Activated naive CD8-positive, alpha-beta T cell treated with anti-CD3 and anti-CD28 coated beads, Interleukin-2, amount 10 ng/mL, durations not matched to agents 7 days and 5 days (primary cell): ENCODE measurements at regions of chr17 and their contacts with region 1.

Region 1: DNA sequence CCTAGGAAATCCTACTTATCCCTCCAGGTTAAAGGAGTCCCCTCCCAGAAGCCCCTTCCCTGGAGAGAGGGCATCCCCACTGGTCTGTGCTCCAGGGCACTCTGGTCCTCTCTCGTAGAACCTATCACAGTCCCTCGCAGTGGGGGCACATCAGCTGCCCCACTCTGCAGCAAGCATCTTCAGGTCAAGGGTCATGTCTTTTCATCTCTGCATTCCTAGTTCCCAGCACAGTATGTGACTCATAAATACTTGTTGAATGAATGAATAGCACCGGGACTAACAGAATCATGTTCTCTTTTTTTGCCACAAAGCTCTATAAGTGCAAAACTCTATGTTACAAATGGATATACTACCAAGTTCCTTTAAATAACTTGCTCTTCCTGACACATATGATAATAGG is 36.0 kb downstream of the RNF157 start:
- DNase-seq: peak; percentile 17
- ATAC-seq: no peak
- H3K4me3 Mint-ChIP-seq: no peak overlapping the region
- H3K27ac Mint-ChIP-seq: peak overlapping the region; percentile 54
- H3K4me1 Mint-ChIP-seq: peaks cover 57% of the 10 kb centered on the region
- H3K27me3 Mint-ChIP-seq: no peaks in the 10 kb centered on the region

Region 2: GRCh38 chr17:76191896-76192295 is 12.4 kb before region 1 on chr17:
- POLR2A ChIA-PET with region 1: interaction called, 26 read pairs
- DNase-seq: no peak
- ATAC-seq: peak; percentile 80
- H3K4me3 Mint-ChIP-seq: peak overlapping the region; percentile 74
- H3K27ac Mint-ChIP-seq: peak overlapping the region; percentile 91
- H3K4me1 Mint-ChIP-seq: peaks cover 69% of the 10 kb centered on the region
- H3K27me3 Mint-ChIP-seq: no peaks in the 10 kb centered on the region

Region 3: GRCh38 chr17:76240461-76241203 is 36.4 kb after region 1 on chr17 and contains the start of gene RNF157:
- POLR2A ChIA-PET with region 1: interaction called, 20 read pairs
- DNase-seq: peak; percentile 84
- ATAC-seq: peak; percentile 87
- H3K4me3 Mint-ChIP-seq: peak within 1 kb of the TSS; percentile 94
- H3K27ac Mint-ChIP-seq: peak within 1 kb of the TSS; percentile 96
- H3K4me1 Mint-ChIP-seq: peaks cover 62% of the 10 kb centered on the region
- H3K27me3 Mint-ChIP-seq: no peaks in the 10 kb centered on the region
- total RNA-seq, gene RNF157: 103 to 110 TPM

Region 4: DNA sequence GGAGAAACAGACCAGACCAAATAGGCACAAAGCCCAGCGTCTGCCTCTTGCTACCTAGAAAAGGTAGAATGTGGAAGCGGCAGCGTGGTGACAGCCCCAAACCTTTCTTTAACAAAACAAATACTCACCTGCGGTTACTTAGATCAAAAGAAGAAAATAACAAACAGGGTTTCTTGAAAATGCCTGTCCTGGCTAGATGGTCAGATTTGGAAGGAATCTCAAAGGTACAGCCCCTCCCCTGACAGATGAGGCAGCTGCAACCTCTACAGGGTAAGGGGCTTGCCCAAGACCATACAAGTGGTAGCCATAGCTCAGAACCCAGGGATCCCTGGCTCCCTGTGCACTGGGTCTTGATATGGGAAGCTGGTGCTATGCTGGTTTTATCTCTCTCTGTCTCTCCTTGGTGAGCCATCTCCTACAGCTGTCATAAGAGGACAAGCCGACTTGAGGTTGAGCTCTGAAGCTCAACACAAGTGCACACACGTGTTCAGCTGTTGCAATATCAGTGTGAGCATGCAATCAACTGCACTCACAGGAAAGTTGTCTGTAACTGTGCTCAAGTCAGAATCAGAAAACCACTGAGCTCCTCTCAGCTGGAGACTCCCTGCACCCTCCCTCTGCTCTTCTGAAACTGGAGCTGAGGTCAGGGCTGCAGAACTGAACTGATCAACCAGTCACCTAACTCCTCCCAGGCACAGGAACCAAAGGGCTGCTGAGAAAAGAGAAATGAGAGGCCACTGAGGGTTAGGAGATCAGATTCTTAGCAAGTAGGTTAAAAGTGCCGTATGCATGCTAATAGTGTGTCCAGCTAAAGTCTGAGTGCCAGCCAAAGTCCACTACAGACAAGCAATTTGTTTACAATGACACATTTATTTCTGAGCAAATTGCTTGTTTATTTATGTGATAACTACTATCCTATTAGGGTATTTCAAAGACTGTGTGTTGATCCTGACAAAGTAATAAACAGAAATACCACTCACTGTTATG is 42.1 kb after region 1 on chr17:
- POLR2A ChIA-PET with region 1: interaction called, 12 read pairs
- DNase-seq: peak; percentile 60
- ATAC-seq: peak; percentile 98
- H3K4me3 Mint-ChIP-seq: peak overlapping the region; percentile 59
- H3K27ac Mint-ChIP-seq: peak overlapping the region; percentile 95
- H3K4me1 Mint-ChIP-seq: peaks cover 56% of the 10 kb centered on the region
- H3K27me3 Mint-ChIP-seq: no peaks in the 10 kb centered on the region

Region 5: GRCh38 chr17:76255801-76256429 is 51.6 kb after region 1 on chr17:
- POLR2A ChIA-PET with region 1: interaction called, 15 read pairs
- DNase-seq: peak; percentile 34
- ATAC-seq: peak; percentile 2
- H3K4me3 Mint-ChIP-seq: peak overlapping the region; percentile 83
- H3K27ac Mint-ChIP-seq: peak overlapping the region; percentile 94
- H3K4me1 Mint-ChIP-seq: peaks cover 41% of the 10 kb centered on the region
- H3K27me3 Mint-ChIP-seq: no peaks in the 10 kb centered on the region

Region 6: DNA sequence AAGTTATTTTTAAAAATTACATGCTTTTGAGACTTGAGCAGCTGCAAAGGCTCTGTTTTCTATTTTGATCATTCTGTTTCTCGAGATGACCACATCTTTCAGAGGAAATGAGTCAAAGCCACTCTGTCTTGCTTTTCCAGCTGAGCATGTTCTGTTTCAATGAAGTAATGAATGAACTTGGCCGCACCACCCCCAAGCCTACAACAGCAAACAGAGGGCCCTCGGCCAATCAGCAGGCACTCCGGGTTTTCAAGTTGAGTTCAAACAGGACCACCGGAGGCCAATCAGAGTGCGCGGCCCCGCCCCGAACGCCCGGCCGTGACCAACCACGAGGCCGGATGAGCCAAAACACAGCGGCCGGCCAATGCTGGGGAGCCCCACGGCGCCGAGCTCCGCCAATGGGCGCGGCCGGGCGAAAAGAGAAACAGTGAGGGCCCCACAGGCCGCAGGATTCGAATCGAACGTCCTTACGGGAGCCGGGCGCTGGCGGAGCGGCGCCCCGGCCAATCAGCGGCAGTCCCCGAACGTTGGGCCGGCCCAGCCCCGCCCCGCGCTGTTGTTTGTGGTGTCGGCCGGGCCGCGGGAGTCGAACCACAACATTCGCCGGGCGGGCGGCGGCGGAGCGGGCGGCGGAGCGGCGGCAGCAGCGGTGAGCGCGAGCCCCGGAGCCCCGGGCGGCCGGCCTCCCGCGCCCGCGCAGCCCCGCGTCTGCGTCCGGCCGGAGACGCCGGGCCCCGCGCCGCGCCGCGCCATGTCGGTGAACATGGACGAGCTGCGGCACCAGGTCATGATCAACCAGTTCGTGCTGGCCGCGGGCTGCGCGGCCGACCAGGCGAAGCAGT is 60.7 kb after region 1 on chr17 and contains the start of gene UBALD2:
- POLR2A ChIA-PET with region 1: interaction called, 57 read pairs
- DNase-seq: peak; percentile 99
- ATAC-seq: peak; percentile 81
- H3K4me3 Mint-ChIP-seq: peak within 1 kb of the TSS; percentile 88
- H3K27ac Mint-ChIP-seq: peak within 1 kb of the TSS; percentile 96
- H3K4me1 Mint-ChIP-seq: peaks cover 51% of the 10 kb centered on the region
- H3K27me3 Mint-ChIP-seq: no peaks in the 10 kb centered on the region
- total RNA-seq, gene UBALD2: 344 to 375 TPM